T-cell (primary cell): ENCODE measurements at regions of chr15 and their contacts with region 1.

Region 1: DNA sequence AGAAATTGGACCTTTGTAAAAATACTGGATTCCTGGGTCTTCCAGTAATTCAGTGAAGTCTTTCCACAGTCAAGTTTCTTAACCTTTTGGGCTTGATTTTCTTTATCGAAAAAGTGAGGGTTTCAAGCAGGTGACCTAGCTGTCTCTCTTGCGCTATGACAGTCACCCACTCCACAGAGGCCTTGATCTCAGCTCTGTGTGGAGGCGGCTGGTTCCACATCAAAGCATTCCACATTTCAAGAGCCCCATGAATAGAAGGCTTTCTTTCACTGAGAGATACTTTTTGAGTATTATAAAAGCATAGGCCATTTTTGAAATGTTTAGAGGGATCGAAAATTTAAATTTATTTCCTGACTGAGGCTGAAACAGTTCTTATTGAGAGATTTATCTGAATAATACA is 43.9 kb downstream of the GABRA5 start:
- DNase-seq: no peak
- ATAC-seq: no peak
- H3K4me3 ChIP-seq: no peak overlapping the region
- H3K4me3 Mint-ChIP-seq: no peak overlapping the region
- H3K27ac ChIP-seq: no peak overlapping the region
- H3K27ac Mint-ChIP-seq: no peak overlapping the region
- H3K4me1 ChIP-seq: no peaks in the 10 kb centered on the region
- H3K4me1 Mint-ChIP-seq: no peaks in the 10 kb centered on the region
- H3K27me3 ChIP-seq: no peaks in the 10 kb centered on the region
- H3K27me3 Mint-ChIP-seq: no peaks in the 10 kb centered on the region

Region 2: DNA sequence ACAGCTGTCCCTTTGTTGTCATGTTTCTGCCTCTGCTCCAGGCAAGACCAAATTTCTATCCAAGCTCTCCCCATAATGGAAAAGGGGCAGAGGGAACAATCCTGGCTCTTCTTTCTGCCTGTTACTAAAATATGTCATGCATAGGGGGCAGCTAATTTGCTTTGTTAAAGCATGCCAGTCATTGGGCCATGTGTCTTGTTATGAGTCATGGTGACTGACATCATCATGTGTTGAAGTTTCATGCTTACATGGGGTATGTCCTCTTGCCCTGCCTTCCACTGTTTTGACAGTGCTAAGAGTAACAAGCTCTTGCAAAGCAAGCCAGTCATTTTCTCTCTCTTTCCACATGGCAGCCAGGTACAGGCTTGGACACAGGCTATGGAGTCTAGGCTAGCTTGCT is 406.7 kb before region 1 on chr15:
- CTCF ChIA-PET with region 1: interaction called in 1 of 2 experiments, 10 read pairs
- POLR2A ChIA-PET with region 1: no interaction called
- DNase-seq: no peak
- ATAC-seq: no peak
- H3K4me3 ChIP-seq: no peak overlapping the region
- H3K4me3 Mint-ChIP-seq: no peak overlapping the region
- H3K27ac ChIP-seq: no peak overlapping the region
- H3K27ac Mint-ChIP-seq: no peak overlapping the region
- H3K4me1 ChIP-seq: no peaks in the 10 kb centered on the region
- H3K4me1 Mint-ChIP-seq: no peaks in the 10 kb centered on the region
- H3K27me3 ChIP-seq: no peaks in the 10 kb centered on the region
- H3K27me3 Mint-ChIP-seq: no peaks in the 10 kb centered on the region